ENCODE measurements at regions of chr6 and their contacts with region 1.

Region 1: DNA sequence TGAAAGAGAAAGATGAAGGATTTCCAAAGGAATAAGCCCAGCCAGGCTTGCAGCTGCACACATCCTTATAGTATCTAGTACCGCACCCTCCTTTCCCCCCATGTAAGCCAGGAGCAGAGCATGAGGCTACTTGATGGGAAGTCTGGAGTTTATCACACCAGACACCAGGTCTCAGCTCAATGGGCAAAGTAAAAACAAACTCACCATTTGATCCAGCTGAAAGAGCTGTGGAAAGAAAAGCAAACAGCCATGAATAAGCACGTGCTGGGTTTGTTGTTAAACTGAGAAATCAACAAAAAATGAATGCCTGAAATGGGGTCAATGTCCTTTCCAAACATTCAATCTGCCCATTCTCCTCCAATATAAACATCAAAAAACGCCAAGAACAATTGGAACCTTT is 50.6 kb upstream of the MAP7 start:
- DNase-seq: no peak
- H3K4me3 ChIP-seq: no peak overlapping the region
- H3K27ac ChIP-seq: no peak overlapping the region
- H3K4me1 ChIP-seq: peaks cover 0 to 6% of the 10 kb centered on the region in 2 experiments; a peak in 1 of 4 replicates
- H3K27me3 ChIP-seq: no peaks in the 10 kb centered on the region
- CTCF ChIP-seq: no peak
- EP300 ChIP-seq: no peak
- RAD21 ChIP-seq: no peak

Region 2: DNA sequence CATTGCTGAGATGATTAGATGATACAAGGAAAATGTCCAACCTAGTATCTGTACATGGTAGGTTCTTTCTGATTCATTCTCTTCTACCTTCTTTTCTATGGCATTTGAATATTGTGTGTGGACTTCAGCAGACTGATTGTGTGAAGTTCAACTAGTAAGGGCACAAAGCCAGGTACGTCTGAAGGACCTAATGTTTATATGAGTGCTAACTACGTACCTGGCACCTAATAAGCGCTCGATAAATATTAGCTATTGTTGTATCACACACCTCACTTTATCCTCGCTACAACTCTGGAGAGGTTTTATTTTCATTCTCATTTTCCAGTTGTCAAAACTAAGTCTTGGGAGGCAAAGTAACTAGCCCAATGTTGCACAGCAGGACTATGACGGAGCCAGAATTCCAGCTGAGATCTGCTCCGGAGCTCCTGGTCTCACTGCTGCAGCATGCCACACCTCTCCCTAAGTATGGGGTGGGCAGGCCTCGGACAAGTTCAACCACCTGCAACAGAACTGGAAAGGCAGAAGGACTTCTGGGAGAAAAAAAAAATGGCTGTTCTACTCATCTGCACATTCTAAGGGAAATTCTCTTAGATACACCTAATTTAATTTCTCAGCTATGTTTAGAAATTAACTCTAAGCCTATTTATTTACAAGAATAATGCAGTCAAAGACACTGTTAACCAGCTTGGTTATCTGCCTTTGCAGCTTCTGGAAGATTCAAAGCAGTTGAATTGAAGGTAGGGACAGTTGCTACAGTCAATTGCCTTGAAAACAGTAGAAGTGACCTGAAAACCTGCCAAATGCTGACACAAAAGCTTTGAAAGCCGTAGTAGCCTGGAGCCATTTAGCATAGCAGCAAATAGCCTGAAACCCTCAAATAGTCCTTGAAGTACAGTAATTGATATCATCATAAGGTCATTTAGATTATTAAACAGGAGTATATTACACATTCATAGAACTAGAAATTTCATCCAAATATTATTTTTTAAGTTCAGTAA is 584.3 kb before region 1 on chr6:
- CTCF ChIA-PET with region 1: no interaction called
- POLR2A ChIA-PET with region 1: no interaction called
- DNase-seq: no peak
- H3K4me3 ChIP-seq: no peak overlapping the region
- H3K27ac ChIP-seq: peak overlapping the region in 1 of 2 experiments; percentile 98; a peak in 2 of 4 replicates
- H3K4me1 ChIP-seq: peaks cover 11 to 27% of the 10 kb centered on the region in 2 experiments
- H3K27me3 ChIP-seq: no peaks in the 10 kb centered on the region
- CTCF ChIP-seq: no peak
- EP300 ChIP-seq: no peak
- RAD21 ChIP-seq: no peak

Region 3: GRCh38 chr6:136582711-136583471 is 17.9 kb before region 1 on chr6:
- CTCF ChIA-PET with region 1: interaction called, 10 read pairs
- POLR2A ChIA-PET with region 1: no interaction called
- DNase-seq: peak; percentile 36
- H3K4me3 ChIP-seq: no peak overlapping the region
- H3K27ac ChIP-seq: peak overlapping the region in 1 of 2 experiments; percentile 75; a peak in 2 of 4 replicates
- H3K4me1 ChIP-seq: peaks cover 0 to 6% of the 10 kb centered on the region in 2 experiments; a peak in 1 of 4 replicates
- H3K27me3 ChIP-seq: no peaks in the 10 kb centered on the region
- CTCF ChIP-seq: peak; percentile 73
- EP300 ChIP-seq: no peak
- RAD21 ChIP-seq: peak; percentile 67

Measured in SK-N-SH (cell line).